HCT116 (cell line): ENCODE measurements at regions of chrX and their contacts with region 1.

Region 1: DNA sequence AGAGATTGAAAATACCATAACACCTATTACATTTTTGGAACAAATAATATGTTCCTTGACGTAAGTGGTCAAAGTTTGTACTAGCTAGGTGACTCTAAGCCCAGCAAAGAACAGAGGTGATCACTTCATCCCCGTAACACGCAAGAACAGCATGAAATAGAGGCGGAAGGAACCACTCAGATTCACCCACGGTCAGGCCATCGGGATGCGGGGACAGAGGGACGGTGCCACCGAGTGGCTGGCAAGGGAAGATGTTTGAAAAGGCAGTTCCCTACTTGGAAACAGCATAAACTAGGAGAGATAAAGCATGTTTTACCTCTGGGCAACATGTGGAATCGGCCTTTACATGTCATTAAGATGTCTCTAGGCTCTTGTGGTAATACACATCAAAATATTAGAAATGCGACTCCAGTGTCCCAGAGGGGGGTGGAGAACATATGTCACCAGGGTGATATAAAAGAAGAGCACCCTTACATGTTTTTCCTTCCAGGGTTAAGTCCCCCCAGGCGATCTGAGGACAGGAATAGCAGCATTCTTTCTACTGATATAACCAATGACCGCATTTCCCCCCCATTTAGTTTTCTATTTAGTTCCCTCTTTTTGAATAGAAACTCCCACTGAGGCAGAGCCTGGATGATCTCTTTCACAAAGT is 84.0 kb downstream of the PHKA2 start:
- DNase-seq: no peak
- ATAC-seq: peak; percentile 54; the same call in 1 of the 2 replicates
- H3K4me3 ChIP-seq: no peak overlapping the region
- H3K27ac ChIP-seq: no peak overlapping the region
- H3K4me1 ChIP-seq: no peaks in the 10 kb centered on the region
- H3K27me3 ChIP-seq: no peaks in the 10 kb centered on the region
- CTCF ChIP-seq: peak; percentile 32 to 36 (median 33); a peak in 4 of 6 replicates
- POLR2A ChIP-seq: no peak
- RAD21 ChIP-seq: peak; percentile 64

Region 2: DNA sequence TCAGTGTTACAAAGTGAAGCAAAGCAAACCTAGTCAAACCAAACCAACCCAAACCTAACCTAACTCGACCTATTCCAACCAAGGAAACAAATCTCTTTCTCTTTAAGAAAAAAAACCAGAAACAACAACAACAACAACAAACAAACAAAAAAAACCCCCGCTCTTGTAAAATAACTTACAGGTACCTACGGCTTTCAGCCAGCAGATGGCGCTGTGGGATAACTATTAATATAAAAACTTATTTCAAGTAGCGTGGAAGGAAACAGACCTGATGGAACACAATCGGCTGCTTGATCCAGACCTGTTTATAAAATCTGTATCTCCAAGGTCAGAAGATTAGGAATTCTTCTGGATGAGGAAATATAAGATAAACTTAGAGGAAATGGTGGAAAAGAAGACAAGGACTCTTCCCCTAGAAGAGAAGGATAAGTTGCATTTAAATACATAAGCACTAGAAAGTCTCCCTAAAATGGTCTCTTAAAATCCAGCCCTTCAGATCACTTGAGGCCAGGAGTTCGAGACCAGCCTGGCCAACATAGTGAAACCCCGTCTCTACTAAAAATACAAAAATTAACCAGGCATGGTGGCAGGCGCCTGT is 508.9 kb before region 1 on chrX:
- CTCF ChIA-PET with region 1: no interaction called
- POLR2A ChIA-PET with region 1: no interaction called
- RAD21 ChIA-PET with region 1: no interaction called
- intact Hi-C with region 1: loop called (anchors 5 kb)
- DNase-seq: peak; percentile 57
- ATAC-seq: peak; percentile 59; the same call in 1 of the 2 replicates
- H3K4me3 ChIP-seq: no peak overlapping the region
- H3K27ac ChIP-seq: no peak overlapping the region
- H3K4me1 ChIP-seq: no peaks in the 10 kb centered on the region
- H3K27me3 ChIP-seq: no peaks in the 10 kb centered on the region
- CTCF ChIP-seq: peak; percentile 30 to 88 (median 58); a peak in 4 of 6 replicates
- POLR2A ChIP-seq: no peak
- RAD21 ChIP-seq: peak; percentile 79

Region 3: GRCh38 chrX:18410043-18410442 is 489.9 kb before region 1 on chrX:
- CTCF ChIA-PET with region 1: no interaction called
- POLR2A ChIA-PET with region 1: no interaction called
- RAD21 ChIA-PET with region 1: no interaction called
- intact Hi-C with region 1: loop called (anchors 1 kb)
- DNase-seq: peak; percentile 21
- ATAC-seq: peak; percentile 64; the same call in 1 of the 2 replicates
- H3K4me3 ChIP-seq: no peak overlapping the region
- H3K27ac ChIP-seq: no peak overlapping the region
- H3K4me1 ChIP-seq: no peaks in the 10 kb centered on the region
- H3K27me3 ChIP-seq: no peaks in the 10 kb centered on the region
- CTCF ChIP-seq: peak; percentile 12 to 51 (median 37); a peak in 4 of 6 replicates
- POLR2A ChIP-seq: no peak
- RAD21 ChIP-seq: peak; percentile 66

Region 4: GRCh38 chrX:18828832-18829404 is 71.0 kb before region 1 on chrX:
- CTCF ChIA-PET with region 1: no interaction called
- POLR2A ChIA-PET with region 1: no interaction called
- RAD21 ChIA-PET with region 1: no interaction called
- intact Hi-C with region 1: no loop called
- DNase-seq: no peak
- ATAC-seq: no peak
- H3K4me3 ChIP-seq: no peak overlapping the region
- H3K27ac ChIP-seq: no peak overlapping the region
- H3K4me1 ChIP-seq: no peaks in the 10 kb centered on the region
- H3K27me3 ChIP-seq: no peaks in the 10 kb centered on the region
- CTCF ChIP-seq: no peak
- POLR2A ChIP-seq: no peak
- RAD21 ChIP-seq: no peak